Activated CD4-positive, alpha-beta T cell treated with anti-CD3 and anti-CD28 coated beads for 36 hours (primary cell): ENCODE measurements at regions of chr11 and their contacts with region 1.

Region 1: GRCh38 chr11:66616379-66617154 is at the start of gene RBM14:
- DNase-seq: peak; percentile 99
- ATAC-seq: peak; percentile 98
- H3K4me3 Mint-ChIP-seq: peak within 1 kb of the TSS; percentile 89
- H3K27ac Mint-ChIP-seq: peak within 1 kb of the TSS; percentile 97
- H3K4me1 Mint-ChIP-seq: peaks cover 31% of the 10 kb centered on the region
- H3K27me3 Mint-ChIP-seq: no peaks in the 10 kb centered on the region
- total RNA-seq, gene RBM14: 122 to 137 TPM

Region 2: DNA sequence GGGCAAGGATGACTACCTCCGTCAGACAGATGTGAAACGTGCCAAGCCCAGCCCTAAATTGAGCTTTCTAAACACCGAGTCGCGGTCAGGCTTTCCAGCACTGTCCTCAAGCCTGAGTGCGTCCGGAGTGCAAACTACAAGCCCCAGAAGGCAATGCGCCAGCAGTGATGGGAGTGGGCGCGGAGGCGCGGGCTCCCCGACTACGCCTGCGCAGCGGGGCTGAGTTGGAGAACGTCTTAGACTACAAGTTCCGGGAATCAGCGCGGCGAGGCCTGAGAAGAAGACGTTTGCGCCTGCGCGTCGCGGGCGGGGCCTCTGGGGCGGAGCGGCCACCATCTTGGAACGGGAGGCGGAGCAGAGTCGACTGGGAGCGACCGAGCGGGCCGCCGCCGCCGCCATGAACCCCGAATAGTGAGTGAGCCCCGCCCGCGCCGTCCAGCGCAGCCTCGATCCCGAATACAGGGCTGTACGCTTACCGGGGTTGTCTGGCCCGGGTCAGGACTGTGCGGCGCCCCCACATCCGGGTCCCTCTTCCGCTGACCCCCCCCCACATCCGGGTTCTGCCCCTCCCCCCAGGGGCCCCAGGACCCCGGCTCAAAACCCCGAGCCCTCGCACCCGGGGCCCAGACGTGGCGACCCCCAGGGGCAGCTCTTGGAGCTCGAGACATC is 348.1 kb before region 1 on chr11 and contains the start of gene RAB1B:
- CTCF ChIA-PET with region 1: no interaction called
- POLR2A ChIA-PET with region 1: no interaction called
- intact Hi-C with region 1: loop called in 1 of 2 experiments (anchors 5 kb)
- DNase-seq: peak; percentile 100
- ATAC-seq: peak; percentile 88
- H3K4me3 Mint-ChIP-seq: peak within 1 kb of the TSS; percentile 100
- H3K27ac Mint-ChIP-seq: peak within 1 kb of the TSS; percentile 97
- H3K4me1 Mint-ChIP-seq: peaks cover 28% of the 10 kb centered on the region
- H3K27me3 Mint-ChIP-seq: no peaks in the 10 kb centered on the region
- total RNA-seq, gene RAB1B: 114 to 147 TPM

Region 3: DNA sequence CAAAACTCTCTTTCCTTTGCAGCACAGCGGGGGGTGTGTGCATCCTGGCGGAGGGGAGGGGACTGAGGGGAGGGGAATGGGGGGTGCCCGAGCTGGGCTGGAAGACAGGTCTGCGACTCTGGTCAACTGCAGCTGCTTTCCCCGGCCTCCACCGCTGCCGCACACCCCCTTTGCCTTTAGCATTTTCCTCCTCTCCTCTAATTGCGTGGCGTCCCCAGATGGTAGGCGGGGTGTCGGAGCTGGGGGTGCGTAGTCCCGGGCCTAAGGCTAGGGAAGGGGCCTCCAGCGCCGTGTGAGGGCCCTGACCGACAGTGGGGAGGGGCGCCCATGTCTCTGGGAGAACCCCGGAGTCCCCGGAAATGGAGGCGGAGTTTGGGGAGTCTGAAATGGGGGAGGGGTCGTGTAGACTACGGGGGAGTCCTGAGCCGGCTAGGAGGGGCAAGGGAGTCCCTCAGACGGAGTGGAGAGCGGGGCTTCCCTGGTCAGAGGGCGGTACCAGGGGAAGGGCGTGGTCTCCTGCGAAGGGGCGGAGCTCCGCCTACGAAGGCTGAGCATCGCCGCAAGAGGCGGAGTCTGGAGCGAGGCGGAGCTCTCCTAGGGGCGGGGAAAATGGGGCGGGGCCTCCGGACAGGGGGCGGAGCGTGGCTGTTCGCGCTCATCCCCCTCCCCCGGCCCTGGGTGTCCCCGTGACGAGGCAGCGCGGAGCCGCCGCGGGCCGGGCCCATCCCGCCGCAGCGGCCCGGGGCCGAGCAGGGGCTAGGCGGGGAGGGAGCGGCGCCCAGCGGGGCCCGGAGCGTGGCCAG is 150.1 kb before region 1 on chr11 and contains the start of gene PELI3:
- CTCF ChIA-PET with region 1: no interaction called
- POLR2A ChIA-PET with region 1: no interaction called
- intact Hi-C with region 1: loop called in 1 of 2 experiments (anchors 1 kb)
- DNase-seq: peak; percentile 98
- ATAC-seq: peak; percentile 88
- H3K4me3 Mint-ChIP-seq: peak within 1 kb of the TSS; percentile 85
- H3K27ac Mint-ChIP-seq: peak within 1 kb of the TSS; percentile 79
- H3K4me1 Mint-ChIP-seq: peaks cover 38% of the 10 kb centered on the region
- H3K27me3 Mint-ChIP-seq: no peaks in the 10 kb centered on the region
- total RNA-seq, gene PELI3: 5.7 to 7.0 TPM

Region 4: DNA sequence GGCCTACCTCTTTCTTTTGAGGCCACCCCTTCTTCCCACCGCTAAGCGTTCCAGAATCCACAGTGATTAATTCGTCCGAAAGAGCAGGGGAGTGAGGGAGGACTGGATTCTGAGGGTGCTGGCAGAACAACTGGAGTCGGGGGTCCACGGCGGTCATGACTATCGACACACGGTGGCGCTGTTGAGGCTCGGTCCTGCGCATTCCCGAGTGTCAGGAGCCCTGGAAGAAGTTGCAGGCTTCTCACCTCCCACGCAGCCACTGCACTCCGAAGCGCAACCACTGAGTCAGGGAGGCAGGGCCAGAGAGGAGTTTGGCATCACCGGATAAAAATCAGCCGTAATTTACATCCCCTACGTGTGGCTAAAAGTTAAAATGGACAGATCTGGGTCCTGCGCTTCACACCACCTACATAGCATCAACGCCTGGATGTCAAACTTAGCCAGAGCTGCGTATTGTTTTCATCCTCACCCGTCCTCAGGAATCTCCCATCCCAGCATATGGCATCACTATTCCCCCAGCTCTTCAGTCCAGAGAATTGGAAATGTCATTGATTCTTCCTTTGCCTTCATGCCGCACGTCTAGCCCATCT is 37.5 kb before region 1 on chr11:
- CTCF ChIA-PET with region 1: interaction called, 3 read pairs
- POLR2A ChIA-PET with region 1: no interaction called
- intact Hi-C with region 1: loop called (anchors 1 to 5 kb)
- DNase-seq: peak; percentile 91
- ATAC-seq: peak; percentile 90
- H3K4me3 Mint-ChIP-seq: no peak overlapping the region
- H3K27ac Mint-ChIP-seq: no peak overlapping the region
- H3K4me1 Mint-ChIP-seq: peaks cover 16% of the 10 kb centered on the region
- H3K27me3 Mint-ChIP-seq: peaks cover 2% of the 10 kb centered on the region

Region 5: GRCh38 chr11:66677599-66678375 is 61.2 kb after region 1 on chr11 and contains the start of gene RBM4B:
- CTCF ChIA-PET with region 1: interaction called, 14 read pairs
- POLR2A ChIA-PET with region 1: interaction called, 10 read pairs
- intact Hi-C with region 1: loop called (anchors 1 kb)
- DNase-seq: peak; percentile 97
- ATAC-seq: peak; percentile 90
- H3K4me3 Mint-ChIP-seq: peak within 1 kb of the TSS; percentile 85
- H3K27ac Mint-ChIP-seq: peak within 1 kb of the TSS; percentile 94
- H3K4me1 Mint-ChIP-seq: peaks cover 27% of the 10 kb centered on the region
- H3K27me3 Mint-ChIP-seq: no peaks in the 10 kb centered on the region
- total RNA-seq, gene RBM4B: 14.7 to 14.8 TPM

Region 6: GRCh38 chr11:66958232-66958955 is 341.8 kb after region 1 on chr11 and contains the start of gene PC:
- CTCF ChIA-PET with region 1: no interaction called
- POLR2A ChIA-PET with region 1: no interaction called
- intact Hi-C with region 1: loop called in 1 of 2 experiments (anchors 1 kb)
- DNase-seq: peak; percentile 99
- ATAC-seq: peak; percentile 98
- H3K4me3 Mint-ChIP-seq: peak within 1 kb of the TSS; percentile 78
- H3K27ac Mint-ChIP-seq: peak within 1 kb of the TSS; percentile 90
- H3K4me1 Mint-ChIP-seq: peaks cover 18% of the 10 kb centered on the region
- H3K27me3 Mint-ChIP-seq: no peaks in the 10 kb centered on the region
- total RNA-seq, gene PC: 9.2 to 9.3 TPM